Activated CD4-positive, alpha-beta memory T cell treated with anti-CD3 and anti-CD28 coated beads for 36 hours (primary cell): ENCODE measurements at regions of chr1 and their contacts with region 1.

Region 1: DNA sequence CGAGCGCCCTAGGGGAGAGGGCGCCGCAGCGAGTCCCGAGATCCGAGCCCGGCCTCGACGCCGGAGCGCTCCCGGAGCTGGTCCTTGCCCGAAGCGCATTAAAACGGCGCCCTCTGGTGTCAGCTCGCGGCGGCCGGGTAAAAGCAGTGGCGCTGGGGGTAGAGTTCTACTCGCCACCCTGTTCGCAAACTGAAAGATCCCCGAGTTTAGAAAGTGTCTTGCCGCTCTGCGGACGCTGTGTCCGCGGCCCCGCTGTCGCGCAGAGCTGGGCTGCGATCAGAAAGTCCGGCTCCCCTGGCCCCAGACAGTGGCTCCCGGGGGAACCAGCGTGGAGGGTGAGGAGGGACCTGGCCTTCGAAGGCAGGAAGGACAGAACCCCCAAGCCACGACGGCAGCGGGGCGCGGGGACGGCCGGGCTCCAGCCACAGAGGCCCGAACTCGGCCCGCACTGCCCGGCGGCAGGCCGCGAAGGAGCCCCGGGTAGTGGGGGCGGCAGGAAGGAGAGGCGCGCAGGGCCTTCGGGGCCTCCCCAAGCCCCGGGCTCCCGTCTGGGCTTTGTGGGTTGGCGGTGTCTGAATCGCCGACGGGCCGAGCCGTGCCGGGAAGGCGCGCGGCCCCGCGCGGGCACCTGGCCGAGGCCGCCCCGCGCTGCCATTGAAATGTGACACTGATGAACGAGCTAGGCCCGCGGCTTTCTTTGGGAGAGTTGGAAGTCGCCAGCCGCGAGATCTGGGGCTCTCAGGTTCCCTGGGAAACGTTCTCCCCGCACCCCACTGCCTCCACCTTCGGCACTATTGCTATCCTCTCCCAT is 39.1 kb upstream of the NFIA start:
- DNase-seq: peak; percentile 90
- H3K4me3 Mint-ChIP-seq: peak overlapping the region; percentile 68
- H3K27ac Mint-ChIP-seq: no peak overlapping the region
- H3K4me1 Mint-ChIP-seq: peaks cover 5% of the 10 kb centered on the region
- H3K27me3 Mint-ChIP-seq: peaks cover 27% of the 10 kb centered on the region

Region 2: GRCh38 chr1:59971464-59971911 is 1071.7 kb before region 1 on chr1:
- CTCF ChIA-PET with region 1: interaction called, 10 read pairs
- POLR2A ChIA-PET with region 1: no interaction called
- intact Hi-C with region 1: loop called (anchors 5 kb)
- DNase-seq: peak; percentile 60
- H3K4me3 Mint-ChIP-seq: no peak overlapping the region
- H3K27ac Mint-ChIP-seq: no peak overlapping the region
- H3K4me1 Mint-ChIP-seq: peaks cover 6% of the 10 kb centered on the region
- H3K27me3 Mint-ChIP-seq: peaks cover 21% of the 10 kb centered on the region

Region 3: DNA sequence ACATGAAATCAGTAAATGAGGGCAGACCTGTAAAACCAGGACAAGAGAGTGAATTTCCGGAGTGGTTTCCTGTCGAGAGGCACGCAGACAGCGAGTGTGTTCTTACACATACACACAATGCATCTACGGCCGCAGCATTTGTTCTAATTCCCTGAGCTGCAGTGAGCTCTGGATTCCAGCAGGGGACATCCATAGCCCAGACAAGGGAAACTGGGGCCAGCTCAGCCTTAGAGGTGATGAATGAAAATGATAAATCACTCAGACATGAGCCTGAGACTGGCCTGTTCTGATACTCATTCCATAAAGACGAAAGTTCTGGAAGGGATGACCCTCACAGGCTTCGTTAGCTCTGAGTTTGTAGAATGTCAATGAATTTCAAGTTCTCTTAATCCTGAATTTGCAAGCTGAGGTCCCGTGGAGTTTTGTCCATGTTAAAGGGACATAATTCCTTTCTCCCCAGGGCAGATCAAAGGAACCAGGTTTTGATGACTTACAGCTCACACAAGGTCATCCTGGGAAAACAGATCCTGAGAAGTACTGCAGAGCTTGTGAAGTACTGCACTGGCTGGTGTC is 761.8 kb before region 1 on chr1:
- CTCF ChIA-PET with region 1: interaction called, 3 read pairs
- POLR2A ChIA-PET with region 1: no interaction called
- intact Hi-C with region 1: loop called (anchors 2 kb)
- DNase-seq: peak; percentile 36
- H3K4me3 Mint-ChIP-seq: no peak overlapping the region
- H3K27ac Mint-ChIP-seq: no peak overlapping the region
- H3K4me1 Mint-ChIP-seq: peaks cover 3% of the 10 kb centered on the region
- H3K27me3 Mint-ChIP-seq: no peaks in the 10 kb centered on the region

Region 4: DNA sequence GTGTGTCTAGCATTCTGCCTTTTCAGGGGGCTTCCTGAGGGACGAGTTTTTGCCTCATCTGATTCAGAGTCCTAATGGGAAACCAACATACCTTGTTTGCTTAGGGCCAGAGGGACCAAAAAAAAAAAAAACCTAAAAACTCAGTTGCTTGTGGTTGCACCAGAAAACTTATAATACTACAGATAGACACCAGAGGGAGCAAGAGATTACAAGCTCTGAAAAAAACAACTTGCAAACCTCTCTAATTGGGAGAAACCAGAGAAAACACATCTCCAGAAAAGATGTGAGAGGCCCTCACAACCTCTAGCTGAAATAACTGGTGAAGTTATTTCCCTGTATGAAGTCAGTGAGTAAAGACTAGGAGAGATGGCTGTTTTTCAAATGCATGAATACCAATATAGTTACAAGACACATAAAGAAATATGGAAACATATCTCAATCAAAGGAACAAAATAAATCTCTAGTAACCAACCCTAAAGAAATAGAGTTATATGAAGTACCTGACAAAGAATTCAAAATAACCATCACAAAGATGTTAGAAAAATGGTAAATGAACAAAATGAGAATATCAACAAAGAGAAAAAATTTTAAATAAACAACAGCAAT is 194.5 kb before region 1 on chr1:
- CTCF ChIA-PET with region 1: interaction called, 24 read pairs
- POLR2A ChIA-PET with region 1: no interaction called
- intact Hi-C with region 1: loop called (anchors 2 kb)
- DNase-seq: no peak
- H3K4me3 Mint-ChIP-seq: no peak overlapping the region
- H3K27ac Mint-ChIP-seq: no peak overlapping the region
- H3K4me1 Mint-ChIP-seq: no peaks in the 10 kb centered on the region
- H3K27me3 Mint-ChIP-seq: peaks cover 12% of the 10 kb centered on the region

Region 5: DNA sequence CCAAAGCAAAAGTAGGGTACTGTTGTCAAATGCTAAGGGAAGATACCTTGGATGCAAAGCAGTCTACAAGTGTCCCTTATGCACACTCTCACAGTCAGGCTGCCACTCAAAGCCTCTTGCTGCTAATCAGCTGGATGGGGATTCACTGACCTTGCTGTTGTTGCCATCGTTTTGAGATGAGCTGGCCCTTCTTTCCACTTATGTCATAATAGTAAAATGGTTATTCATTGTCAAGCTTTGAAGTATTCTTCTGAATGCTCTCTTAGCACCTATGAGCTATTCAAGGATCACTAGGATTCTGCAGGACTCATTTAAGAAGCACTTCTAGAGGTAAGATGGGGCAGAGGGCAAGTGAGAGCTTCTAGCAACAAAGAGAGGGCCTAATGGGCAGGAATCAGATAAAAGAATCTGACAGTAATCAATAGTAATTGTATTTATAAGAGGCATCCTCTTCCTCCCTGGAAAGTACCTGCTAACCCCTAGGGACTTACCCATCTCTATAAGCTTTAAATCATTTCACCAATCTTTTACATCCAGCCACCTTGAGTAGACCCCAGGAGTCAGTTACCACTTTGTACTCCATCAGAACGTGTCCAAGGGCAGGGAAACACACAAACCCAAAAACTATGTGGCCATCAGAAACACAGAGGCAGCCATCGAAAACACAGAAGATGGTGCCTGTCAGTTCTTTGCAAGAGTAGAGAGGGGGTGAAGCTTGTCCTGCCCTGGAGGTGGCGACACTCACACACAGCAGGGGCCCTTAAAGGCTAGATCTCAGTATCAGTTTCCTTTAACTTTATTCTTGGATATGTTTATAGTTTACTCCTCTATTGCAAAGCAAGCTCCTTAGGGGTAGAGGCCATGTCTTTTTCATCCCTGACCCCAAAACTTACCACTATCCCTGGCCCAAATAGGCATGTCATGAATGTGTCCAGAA is 64.5 kb before region 1 on chr1:
- CTCF ChIA-PET with region 1: interaction called, 29 read pairs
- POLR2A ChIA-PET with region 1: no interaction called
- intact Hi-C with region 1: loop called (anchors 1 kb)
- DNase-seq: peak; percentile 58
- H3K4me3 Mint-ChIP-seq: no peak overlapping the region
- H3K27ac Mint-ChIP-seq: no peak overlapping the region
- H3K4me1 Mint-ChIP-seq: peaks cover 2% of the 10 kb centered on the region
- H3K27me3 Mint-ChIP-seq: peaks cover 3% of the 10 kb centered on the region